Mammary epithelial cell (primary cell): ENCODE measurements at regions of chr9 and their contacts with region 1.

Region 1: GRCh38 chr9:93582115-93582514 is 5.7 kb downstream of the PHF2 start:
- DNase-seq: no peak
- H3K4me3 ChIP-seq: no peak overlapping the region
- H3K27ac ChIP-seq: no peak overlapping the region
- H3K4me1 ChIP-seq: peaks cover 11% of the 10 kb centered on the region
- H3K27me3 ChIP-seq: no peaks in the 10 kb centered on the region
- CTCF ChIP-seq: no peak

Region 2: GRCh38 chr9:93468763-93469456 is 113.2 kb before region 1 on chr9:
- CTCF ChIA-PET with region 1: no interaction called
- dilution Hi-C with region 1: no loop called
- in situ Hi-C with region 1: no loop called
- intact Hi-C with region 1: no loop called
- DNase-seq: peak; percentile 30
- H3K4me3 ChIP-seq: no peak overlapping the region
- H3K27ac ChIP-seq: no peak overlapping the region
- H3K4me1 ChIP-seq: peaks cover 28% of the 10 kb centered on the region
- H3K27me3 ChIP-seq: no peaks in the 10 kb centered on the region
- CTCF ChIP-seq: no peak

Region 3: GRCh38 chr9:93525476-93525875 is 56.6 kb before region 1 on chr9:
- CTCF ChIA-PET with region 1: no interaction called
- dilution Hi-C with region 1: loop called (anchors 5 kb)
- in situ Hi-C with region 1: no loop called
- intact Hi-C with region 1: no loop called
- DNase-seq: no peak
- H3K4me3 ChIP-seq: no peak overlapping the region
- H3K27ac ChIP-seq: no peak overlapping the region
- H3K4me1 ChIP-seq: no peaks in the 10 kb centered on the region
- H3K27me3 ChIP-seq: no peaks in the 10 kb centered on the region
- CTCF ChIP-seq: no peak

Region 4: DNA sequence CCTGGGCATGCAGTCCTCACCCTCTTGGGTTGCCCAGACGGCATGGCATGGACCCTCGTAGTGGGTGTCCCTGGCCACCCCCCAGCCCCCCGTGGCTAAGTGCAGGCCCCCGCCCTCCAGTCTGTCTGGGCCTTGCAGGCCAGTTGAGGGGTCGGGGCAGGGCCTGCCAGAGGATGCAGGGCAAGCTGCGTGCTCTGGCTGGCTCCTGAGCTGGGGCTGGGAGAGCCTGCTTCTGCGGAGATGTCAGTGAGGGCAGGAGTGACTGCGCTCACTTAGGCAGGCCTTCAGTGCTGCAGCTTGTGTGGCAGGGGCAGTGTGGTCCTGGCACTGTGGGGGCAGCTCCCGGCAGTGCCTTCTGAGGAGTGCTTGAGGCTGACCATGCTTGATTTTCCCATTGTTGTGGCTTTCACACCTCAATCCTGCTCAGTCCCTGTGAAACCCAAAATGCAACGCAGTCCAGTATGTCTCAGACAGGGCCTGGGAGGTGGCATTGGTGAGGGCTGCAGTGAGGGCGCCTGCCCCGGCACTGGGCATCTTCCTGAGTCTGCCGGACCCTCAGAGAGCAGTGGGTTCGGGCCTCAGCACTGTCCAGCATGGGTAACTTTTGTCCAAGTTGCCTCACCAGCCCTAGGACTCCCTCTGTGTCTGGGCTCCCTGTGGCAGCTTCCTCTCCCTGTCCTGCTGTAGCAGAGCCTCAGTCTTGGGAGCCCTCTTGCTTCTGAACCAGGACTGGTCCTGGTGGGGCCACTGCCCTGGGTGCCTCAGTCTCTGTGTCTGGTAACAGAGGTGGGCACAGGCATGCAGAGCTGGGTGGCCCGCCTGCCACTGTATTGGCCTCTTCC is 87.2 kb after region 1 on chr9:
- CTCF ChIA-PET with region 1: no interaction called
- dilution Hi-C with region 1: loop called (anchors 5 kb)
- in situ Hi-C with region 1: no loop called
- intact Hi-C with region 1: no loop called
- DNase-seq: no peak
- H3K4me3 ChIP-seq: no peak overlapping the region
- H3K27ac ChIP-seq: no peak overlapping the region
- H3K4me1 ChIP-seq: no peaks in the 10 kb centered on the region
- H3K27me3 ChIP-seq: no peaks in the 10 kb centered on the region
- CTCF ChIP-seq: no peak

Region 5: GRCh38 chr9:93774331-93775102 is 192.4 kb after region 1 on chr9:
- CTCF ChIA-PET with region 1: no interaction called
- dilution Hi-C with region 1: loop called (anchors 5 kb)
- in situ Hi-C with region 1: no loop called
- intact Hi-C with region 1: no loop called
- DNase-seq: no peak
- H3K4me3 ChIP-seq: no peak overlapping the region
- H3K27ac ChIP-seq: no peak overlapping the region
- H3K4me1 ChIP-seq: no peaks in the 10 kb centered on the region
- H3K27me3 ChIP-seq: no peaks in the 10 kb centered on the region
- CTCF ChIP-seq: no peak